Naive thymus-derived CD4-positive, alpha-beta T cell (primary cell): ENCODE measurements at regions of chr19 and their contacts with region 1.

Region 1: DNA sequence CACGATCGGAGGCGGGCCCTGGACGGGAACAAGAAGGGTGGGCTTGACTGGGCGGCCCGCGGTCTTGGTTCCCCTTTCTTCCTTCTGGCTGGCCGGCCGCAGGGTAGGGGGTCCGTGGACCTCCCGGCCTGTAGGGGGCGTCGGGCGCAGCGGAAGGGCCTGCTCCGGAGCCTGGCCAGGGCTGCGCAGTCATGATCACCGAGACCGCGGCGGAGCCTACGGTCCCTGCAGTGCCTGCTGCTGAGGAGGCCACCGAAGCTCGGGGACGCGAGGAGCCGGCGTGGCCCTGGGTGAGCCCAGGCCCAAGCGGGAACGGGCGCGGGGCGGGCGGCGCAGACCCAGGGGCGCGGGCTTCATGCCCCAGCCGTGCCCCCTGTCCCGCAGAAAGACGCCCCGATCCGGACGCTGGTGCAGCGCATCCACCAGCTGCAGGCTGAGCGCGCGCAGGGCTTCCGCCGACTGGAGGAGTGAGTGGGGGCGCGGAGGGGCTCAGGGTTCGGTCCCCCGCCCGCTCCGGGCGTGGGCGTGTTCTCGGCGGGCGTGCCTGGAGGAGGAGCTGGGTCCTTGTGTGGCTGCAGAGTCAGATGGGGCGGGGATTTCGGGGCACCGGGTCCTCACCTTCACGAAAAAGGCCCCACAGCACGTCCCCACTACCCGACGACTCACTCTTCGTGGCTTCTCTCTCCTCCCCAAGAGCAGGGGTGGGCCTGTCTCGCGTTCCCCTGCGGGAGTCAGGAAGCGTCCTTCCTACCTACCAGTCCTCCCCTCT is at the start of gene REX1BD:
- DNase-seq: peak; percentile 77 to 92 (median 89)
- ATAC-seq: peak; percentile 89
- H3K4me3 ChIP-seq: peak within 1 kb of the TSS; percentile 72
- H3K4me3 Mint-ChIP-seq: peak within 1 kb of the TSS; percentile 80 to 95 (median 92)
- H3K27ac ChIP-seq: peak within 1 kb of the TSS; percentile 88
- H3K27ac Mint-ChIP-seq: peak within 1 kb of the TSS; percentile 89 to 96 (median 93)
- H3K4me1 ChIP-seq: peaks cover 18 to 33% of the 10 kb centered on the region in 2 donors
- H3K4me1 Mint-ChIP-seq: peaks cover 20 to 56% (median 42%) of the 10 kb centered on the region in 7 donors
- H3K27me3 ChIP-seq: no peaks in the 10 kb centered on the region
- H3K27me3 Mint-ChIP-seq: peaks cover 0 to 3% (median 0%) of the 10 kb centered on the region in 5 donors
- total RNA-seq, gene REX1BD: 83.9 to 152 (median 116) TPM

Region 2: DNA sequence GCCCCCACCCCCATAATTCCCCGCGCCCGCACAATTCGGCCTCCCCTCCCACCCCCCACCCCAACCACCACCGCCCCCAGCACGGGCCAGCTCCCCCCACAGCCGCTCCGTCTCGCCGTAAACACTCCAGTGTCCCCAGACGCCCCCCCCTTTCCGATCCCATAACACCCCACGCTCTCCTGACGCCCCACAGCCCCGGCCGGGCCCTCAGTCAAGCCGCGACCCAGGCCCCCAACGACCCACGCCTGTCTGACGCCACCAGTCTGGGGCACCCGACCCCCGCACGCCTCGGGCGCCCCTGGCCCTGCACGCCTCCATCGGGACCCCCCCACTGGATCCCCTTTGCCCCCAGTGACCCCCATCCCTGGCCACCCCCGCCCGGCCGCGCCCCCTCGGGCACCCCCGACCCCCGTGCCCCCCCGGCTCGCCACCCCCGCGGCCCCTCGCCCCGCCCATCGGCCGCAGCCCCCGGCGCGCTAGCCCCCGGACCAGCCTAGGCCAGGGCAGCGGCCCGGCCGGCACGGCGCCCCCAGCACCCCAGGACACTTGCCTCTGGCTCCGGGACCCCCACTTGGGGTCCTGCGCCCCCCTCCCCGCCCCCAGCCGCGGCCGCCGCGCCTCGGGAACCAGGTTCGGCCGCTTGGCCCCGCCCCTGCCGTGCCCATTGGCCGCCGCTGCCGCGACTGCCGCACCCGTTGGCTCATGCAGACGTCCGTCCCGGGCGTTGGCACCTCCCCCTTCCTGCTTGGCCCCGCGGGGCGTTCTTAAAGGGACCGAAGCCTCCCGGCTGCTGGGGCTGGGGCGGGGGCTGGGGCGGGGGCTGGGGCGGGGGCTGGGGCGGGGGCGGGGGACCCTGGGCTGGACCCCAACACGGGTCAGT is 45.6 kb before region 1 on chr19 and contains the start of gene FKBP8:
- CTCF ChIA-PET with region 1: interaction called, 3 read pairs
- POLR2A ChIA-PET with region 1: interaction called, 12 read pairs
- intact Hi-C with region 1: loop called (anchors 1 kb)
- DNase-seq: peak; percentile 84 to 95 (median 91)
- ATAC-seq: peak; percentile 97
- H3K4me3 ChIP-seq: peak within 1 kb of the TSS; percentile 68
- H3K4me3 Mint-ChIP-seq: peak within 1 kb of the TSS; percentile 90 to 99 (median 94)
- H3K27ac ChIP-seq: peak within 1 kb of the TSS; percentile 87
- H3K27ac Mint-ChIP-seq: peak within 1 kb of the TSS; percentile 89 to 100 (median 97)
- H3K4me1 ChIP-seq: peaks cover 15 to 16% of the 10 kb centered on the region in 2 donors
- H3K4me1 Mint-ChIP-seq: peaks cover 14 to 31% (median 26%) of the 10 kb centered on the region in 7 donors
- H3K27me3 ChIP-seq: no peaks in the 10 kb centered on the region
- H3K27me3 Mint-ChIP-seq: no peaks in the 10 kb centered on the region
- total RNA-seq, gene FKBP8: 137 to 241 (median 221) TPM

Region 3: GRCh38 chr19:18571564-18572300 is 17.1 kb before region 1 on chr19 and contains the start of gene UBA52:
- CTCF ChIA-PET with region 1: interaction called, 5 read pairs
- POLR2A ChIA-PET with region 1: interaction called, 47 read pairs
- intact Hi-C with region 1: loop called (anchors 1 kb)
- DNase-seq: peak; percentile 97 to 99 (median 98)
- ATAC-seq: peak; percentile 97
- H3K4me3 ChIP-seq: peak within 1 kb of the TSS; percentile 91
- H3K4me3 Mint-ChIP-seq: peak within 1 kb of the TSS; percentile 83 to 97 (median 91)
- H3K27ac ChIP-seq: peak within 1 kb of the TSS; percentile 94
- H3K27ac Mint-ChIP-seq: peak within 1 kb of the TSS; percentile 92 to 99 (median 96)
- H3K4me1 ChIP-seq: peaks cover 17% of the 10 kb centered on the region in 2 donors
- H3K4me1 Mint-ChIP-seq: peaks cover 14 to 38% (median 26%) of the 10 kb centered on the region in 7 donors
- H3K27me3 ChIP-seq: no peaks in the 10 kb centered on the region
- H3K27me3 Mint-ChIP-seq: peaks cover 0 to 2% (median 0%) of the 10 kb centered on the region in 5 donors
- total RNA-seq, gene UBA52: 1,563 to 2,429 (median 2,196) TPM

Region 4: GRCh38 chr19:18831524-18832305 is 242.9 kb after region 1 on chr19 and contains the start of gene UPF1:
- CTCF ChIA-PET with region 1: interaction called, 5 read pairs
- POLR2A ChIA-PET with region 1: interaction called, 15 read pairs
- intact Hi-C with region 1: loop called (anchors 1 to 5 kb)
- DNase-seq: peak; percentile 92 to 99 (median 96)
- ATAC-seq: peak; percentile 93
- H3K4me3 ChIP-seq: peak within 1 kb of the TSS; percentile 95
- H3K4me3 Mint-ChIP-seq: peak within 1 kb of the TSS; percentile 89 to 97 (median 92)
- H3K27ac ChIP-seq: peak within 1 kb of the TSS; percentile 90
- H3K27ac Mint-ChIP-seq: peak within 1 kb of the TSS; percentile 83 to 96 (median 90)
- H3K4me1 ChIP-seq: peaks cover 17 to 23% of the 10 kb centered on the region in 2 donors
- H3K4me1 Mint-ChIP-seq: peaks cover 36 to 42% (median 39%) of the 10 kb centered on the region in 7 donors
- H3K27me3 ChIP-seq: no peaks in the 10 kb centered on the region
- H3K27me3 Mint-ChIP-seq: peaks cover 0 to 18% (median 6%) of the 10 kb centered on the region in 5 donors
- total RNA-seq, gene UPF1: 98.7 to 148 (median 113) TPM